Activated T-helper 1 cell treated with anti-CD3 and anti-CD28 coated beads, Interleukin-12 subunit alpha, Interleukin-12 subunit beta, Interleukin-2, Interleukin-4 antibody, amounts not matched to agents 30 ng/mL and 10 ng/mL and 1 ng/mL, durations not matched to agents 14 hours and 24 hours and 36 hours (primary cell): ENCODE measurements at regions of chr3 and their contacts with region 1.

Region 1: GRCh38 chr3:14178247-14179113 is at the starts of genes LSM3 and XPC:
- DNase-seq: peak; percentile 98
- H3K4me3 Mint-ChIP-seq: peak within 1 kb of the TSS; percentile 94
- H3K27ac Mint-ChIP-seq: peak within 1 kb of the TSS; percentile 99
- H3K4me1 Mint-ChIP-seq: peaks cover 64% of the 10 kb centered on the region
- H3K27me3 Mint-ChIP-seq: no peaks in the 10 kb centered on the region
- total RNA-seq, gene LSM3: 15.6 and 15.8 TPM in 2 replicates
- total RNA-seq, gene XPC: 34.1 and 35.9 TPM in 2 replicates

Region 2: DNA sequence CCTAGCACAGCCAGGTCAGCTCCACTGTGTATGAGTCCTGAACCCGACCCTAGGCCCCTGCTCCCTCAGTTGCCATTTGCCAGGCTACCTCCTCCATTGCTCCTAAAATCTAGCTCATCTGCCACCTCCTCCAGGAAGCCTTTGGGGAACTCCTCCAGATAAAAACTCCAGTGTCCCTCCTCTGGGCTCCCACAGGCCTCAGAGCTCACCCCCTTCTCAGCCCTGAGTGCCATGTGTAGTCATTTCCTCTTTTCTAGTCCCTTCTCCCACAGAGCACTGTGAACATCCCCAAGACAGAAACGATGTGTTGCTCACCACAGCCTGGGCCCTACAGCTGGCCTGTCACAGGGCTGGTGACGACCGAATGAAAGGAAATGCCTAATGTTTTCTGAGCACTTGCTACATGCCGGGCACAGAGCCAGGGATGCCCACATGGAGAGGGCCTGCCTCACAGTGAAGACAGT is 1166.2 kb before region 1 on chr3:
- intact Hi-C with region 1: loop called (anchors 2 kb)
- DNase-seq: peak; percentile 43
- H3K4me3 Mint-ChIP-seq: peak overlapping the region; percentile 80
- H3K27ac Mint-ChIP-seq: peak overlapping the region; percentile 99
- H3K4me1 Mint-ChIP-seq: peaks cover 85% of the 10 kb centered on the region
- H3K27me3 Mint-ChIP-seq: no peaks in the 10 kb centered on the region

Region 3: DNA sequence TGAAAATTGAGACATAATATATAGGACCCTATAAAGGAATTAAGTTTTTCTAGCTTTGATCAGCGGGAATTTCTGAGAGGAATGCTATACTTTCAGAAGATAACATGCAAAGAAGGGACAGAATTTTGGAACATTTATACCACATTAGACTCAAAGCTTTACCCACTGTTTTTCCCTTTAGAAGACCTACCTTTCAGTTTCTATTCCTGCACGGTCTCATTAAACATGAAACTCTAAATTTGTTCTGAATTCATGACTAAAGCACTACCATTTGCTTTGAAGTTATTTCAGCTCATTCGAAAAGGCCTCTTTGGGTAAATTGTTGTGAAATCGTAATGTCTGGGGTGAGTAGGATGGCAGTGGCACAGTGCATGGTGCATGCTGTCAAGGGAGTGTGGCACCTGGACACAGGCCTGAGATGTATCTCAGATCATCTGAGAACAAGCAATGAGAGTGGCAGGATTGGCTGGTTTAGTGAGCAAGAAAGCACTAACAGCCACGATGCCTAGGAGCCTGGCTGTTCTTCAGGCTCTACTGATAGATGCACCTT is 96.3 kb before region 1 on chr3:
- intact Hi-C with region 1: loop called (anchors 2 kb)
- DNase-seq: no peak
- H3K4me3 Mint-ChIP-seq: peak overlapping the region; percentile 9
- H3K27ac Mint-ChIP-seq: peak overlapping the region; percentile 45
- H3K4me1 Mint-ChIP-seq: peaks cover 8% of the 10 kb centered on the region
- H3K27me3 Mint-ChIP-seq: peaks cover 6% of the 10 kb centered on the region

Region 4: GRCh38 chr3:14200841-14201240 is 22.4 kb after region 1 on chr3:
- intact Hi-C with region 1: no loop called
- DNase-seq: no peak
- H3K4me3 Mint-ChIP-seq: no peak overlapping the region
- H3K27ac Mint-ChIP-seq: peak overlapping the region; percentile 34
- H3K4me1 Mint-ChIP-seq: peaks cover 4% of the 10 kb centered on the region
- H3K27me3 Mint-ChIP-seq: no peaks in the 10 kb centered on the region

Region 5: GRCh38 chr3:14402304-14402811 is 223.9 kb after region 1 on chr3 and contains the start of gene SLC6A6:
- intact Hi-C with region 1: loop called (anchors 1 kb)
- DNase-seq: peak; percentile 92
- H3K4me3 Mint-ChIP-seq: peak within 1 kb of the TSS; percentile 97
- H3K27ac Mint-ChIP-seq: peak within 1 kb of the TSS; percentile 96
- H3K4me1 Mint-ChIP-seq: peaks cover 42% of the 10 kb centered on the region
- H3K27me3 Mint-ChIP-seq: peaks cover 3% of the 10 kb centered on the region
- total RNA-seq, gene SLC6A6: 45.4 and 51.2 TPM in 2 replicates

Region 6: GRCh38 chr3:14548321-14548729 is 369.8 kb after region 1 on chr3:
- intact Hi-C with region 1: no loop called
- DNase-seq: no peak
- H3K4me3 Mint-ChIP-seq: no peak overlapping the region
- H3K27ac Mint-ChIP-seq: no peak overlapping the region
- H3K4me1 Mint-ChIP-seq: no peaks in the 10 kb centered on the region
- H3K27me3 Mint-ChIP-seq: peaks cover 19% of the 10 kb centered on the region

Region 7: GRCh38 chr3:14947886-14948555 is 769.5 kb after region 1 on chr3:
- intact Hi-C with region 1: loop called (anchors 1 kb)
- DNase-seq: peak; percentile 95
- H3K4me3 Mint-ChIP-seq: peak overlapping the region; percentile 97
- H3K27ac Mint-ChIP-seq: peak overlapping the region; percentile 100
- H3K4me1 Mint-ChIP-seq: peaks cover 36% of the 10 kb centered on the region
- H3K27me3 Mint-ChIP-seq: no peaks in the 10 kb centered on the region